HepG2 (cell line): ENCODE measurements at regions of chr7 and their contacts with region 1.

Region 1: DNA sequence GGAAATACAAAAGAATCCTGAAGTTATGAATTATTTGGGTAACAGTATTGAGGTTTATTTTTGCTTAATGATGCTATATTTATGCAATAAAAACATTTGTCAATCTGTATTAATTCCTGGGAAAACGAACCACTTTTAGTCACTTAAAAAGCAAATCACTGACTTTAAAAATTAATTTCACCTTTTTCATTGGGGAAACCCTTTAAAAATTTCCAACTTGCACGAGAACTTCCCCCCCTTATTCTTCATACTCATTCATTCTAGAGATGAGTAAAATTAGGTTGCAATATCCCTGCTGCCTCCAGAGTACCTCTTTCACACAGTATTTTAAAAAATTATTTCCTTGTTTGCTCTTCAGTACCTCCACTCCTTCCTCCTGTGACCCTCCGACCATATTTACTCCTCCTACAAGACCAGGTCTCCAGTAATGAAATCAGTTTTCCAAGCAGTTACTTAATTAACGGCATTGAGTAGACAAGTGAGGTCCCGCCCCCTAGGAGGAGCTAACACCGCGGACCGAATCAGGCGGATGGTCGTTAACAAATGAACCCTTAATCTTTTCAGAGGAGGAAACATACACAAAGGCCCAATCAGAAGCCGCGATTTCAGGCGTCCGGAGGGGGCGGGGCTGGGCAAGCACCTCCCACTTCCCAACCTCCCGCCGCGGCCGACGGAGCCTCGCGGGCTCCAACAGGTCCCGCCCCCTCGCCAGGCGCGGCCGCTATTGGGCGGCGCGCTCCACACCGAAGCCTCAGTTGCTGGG is 465 bp upstream of the TRIM24 start:
- DNase-seq: peak; percentile 96
- ATAC-seq: peak; percentile 76
- H3K4me3 ChIP-seq: peak overlapping the region; percentile 61 to 82 (median 65)
- H3K27ac ChIP-seq: peak overlapping the region; percentile 76
- H3K4me1 ChIP-seq: peaks cover 44% of the 10 kb centered on the region
- H3K27me3 ChIP-seq: peaks cover 0 to 3% of the 10 kb centered on the region in 2 experiments; a peak in 1 of 5 replicates
- CTCF ChIP-seq: no peak
- EP300 ChIP-seq: no peak; a peak in 1 of 4 replicates
- POLR2A ChIP-seq: peak in 1 of 2 experiments; percentile 47; a peak in 2 of 4 replicates
- RAD21 ChIP-seq: no peak

Region 2: GRCh38 chr7:138064856-138065357 is 394.7 kb before region 1 on chr7:
- CTCF ChIA-PET with region 1: no interaction called
- POLR2A ChIA-PET with region 1: no interaction called
- in situ Hi-C with region 1: no loop called
- intact Hi-C with region 1: loop called (anchors 1 kb)
- DNase-seq: peak; percentile 68
- ATAC-seq: peak; percentile 66
- H3K4me3 ChIP-seq: peak overlapping the region; percentile 16 to 57 (median 48)
- H3K27ac ChIP-seq: peak overlapping the region; percentile 80
- H3K4me1 ChIP-seq: peaks cover 95% of the 10 kb centered on the region
- H3K27me3 ChIP-seq: no peaks in the 10 kb centered on the region; a peak in 1 of 5 replicates
- CTCF ChIP-seq: peak; percentile 56
- EP300 ChIP-seq: peak in 1 of 2 experiments; percentile 72; a peak in 2 of 4 replicates
- POLR2A ChIP-seq: no peak
- RAD21 ChIP-seq: no peak

Region 3: GRCh38 chr7:138257459-138258196 is 202.0 kb before region 1 on chr7:
- CTCF ChIA-PET with region 1: no interaction called
- POLR2A ChIA-PET with region 1: interaction called, 5 read pairs
- in situ Hi-C with region 1: no loop called
- intact Hi-C with region 1: loop called (anchors 10 kb)
- DNase-seq: peak; percentile 99
- ATAC-seq: peak; percentile 95
- H3K4me3 ChIP-seq: no peak overlapping the region
- H3K27ac ChIP-seq: peak overlapping the region; percentile 93
- H3K4me1 ChIP-seq: peaks cover 43% of the 10 kb centered on the region
- H3K27me3 ChIP-seq: no peaks in the 10 kb centered on the region
- CTCF ChIP-seq: no peak
- EP300 ChIP-seq: peak; percentile 91 to 98
- POLR2A ChIP-seq: no peak
- RAD21 ChIP-seq: peak; percentile 83

Region 4: DNA sequence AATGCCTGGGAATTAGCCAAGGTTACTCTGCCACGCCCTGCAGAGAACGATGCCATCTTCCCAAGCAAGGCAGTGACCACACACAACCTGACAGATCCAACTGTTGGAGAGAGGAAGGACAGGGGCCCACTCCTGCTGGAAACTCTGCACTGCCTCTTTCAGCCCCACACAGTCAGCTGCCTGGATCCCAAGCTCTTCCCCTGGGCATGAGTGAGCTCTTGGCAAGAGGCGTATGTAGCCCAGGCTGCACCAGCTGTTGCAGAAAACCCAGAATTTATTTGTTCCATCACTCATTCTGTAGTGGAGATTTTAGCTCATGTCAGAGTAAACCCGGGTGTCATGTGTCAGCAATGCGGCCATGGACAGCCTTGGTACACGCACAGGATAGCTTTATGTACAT is 134.7 kb before region 1 on chr7:
- CTCF ChIA-PET with region 1: no interaction called
- POLR2A ChIA-PET with region 1: no interaction called
- in situ Hi-C with region 1: no loop called
- intact Hi-C with region 1: no loop called
- DNase-seq: no peak
- ATAC-seq: no peak
- H3K4me3 ChIP-seq: no peak overlapping the region
- H3K27ac ChIP-seq: no peak overlapping the region
- H3K4me1 ChIP-seq: peaks cover 22% of the 10 kb centered on the region
- H3K27me3 ChIP-seq: no peaks in the 10 kb centered on the region
- CTCF ChIP-seq: no peak
- EP300 ChIP-seq: no peak
- POLR2A ChIP-seq: no peak
- RAD21 ChIP-seq: no peak

Region 5: DNA sequence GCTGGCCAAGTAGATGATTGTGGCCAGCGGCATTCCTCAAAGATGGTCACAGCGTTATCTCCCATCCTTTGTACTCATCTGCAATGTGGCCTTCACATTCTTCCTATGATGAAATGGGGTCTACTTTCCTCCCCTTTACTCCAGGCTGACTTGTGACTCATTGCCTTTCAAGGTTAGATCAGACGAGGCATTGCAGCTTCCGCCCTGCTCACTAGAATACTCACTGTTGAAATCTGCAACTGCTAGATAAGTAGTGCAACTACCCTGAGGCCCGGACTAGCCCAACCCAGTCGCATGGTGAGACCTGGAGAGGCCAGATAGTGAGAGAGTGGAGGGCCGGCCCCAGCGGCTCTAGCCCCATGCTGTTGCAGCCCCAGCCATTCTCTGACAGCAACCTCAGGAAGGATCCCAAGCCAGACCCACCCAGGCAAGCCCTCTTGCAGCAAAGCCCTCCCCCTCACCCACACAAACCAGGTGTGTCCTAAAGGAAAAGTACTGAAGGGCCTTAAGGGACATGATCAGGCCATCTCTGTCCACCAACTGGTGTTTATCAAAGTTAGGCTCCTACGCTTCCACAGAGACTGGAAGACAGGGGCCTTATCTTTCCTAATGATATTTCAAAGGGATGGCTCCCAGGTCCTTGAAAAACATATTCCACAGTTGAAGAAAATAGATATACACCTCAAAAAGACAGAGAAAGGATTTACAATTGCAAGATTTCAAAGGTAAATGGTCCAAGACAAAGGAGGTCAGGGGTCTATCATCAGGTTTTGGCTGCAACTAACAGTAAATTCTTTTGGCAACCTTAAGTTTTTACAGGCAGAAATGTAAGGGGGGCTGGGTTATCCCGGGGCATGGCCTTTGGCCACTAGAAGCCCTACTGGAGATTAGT is 106.8 kb before region 1 on chr7:
- CTCF ChIA-PET with region 1: no interaction called
- POLR2A ChIA-PET with region 1: interaction called, 6 read pairs
- in situ Hi-C with region 1: no loop called
- intact Hi-C with region 1: loop called (anchors 2 kb)
- DNase-seq: peak; percentile 100
- ATAC-seq: peak; percentile 99
- H3K4me3 ChIP-seq: peak overlapping the region; percentile 43 to 52 (median 46)
- H3K27ac ChIP-seq: peak overlapping the region; percentile 99
- H3K4me1 ChIP-seq: peaks cover 29% of the 10 kb centered on the region
- H3K27me3 ChIP-seq: no peaks in the 10 kb centered on the region
- CTCF ChIP-seq: no peak; the same call in 1 of the 2 replicates
- EP300 ChIP-seq: peak; percentile 83 to 99; a peak in 3 of 4 replicates
- POLR2A ChIP-seq: peak; percentile 68 to 86
- RAD21 ChIP-seq: peak; percentile 62

Region 6: DNA sequence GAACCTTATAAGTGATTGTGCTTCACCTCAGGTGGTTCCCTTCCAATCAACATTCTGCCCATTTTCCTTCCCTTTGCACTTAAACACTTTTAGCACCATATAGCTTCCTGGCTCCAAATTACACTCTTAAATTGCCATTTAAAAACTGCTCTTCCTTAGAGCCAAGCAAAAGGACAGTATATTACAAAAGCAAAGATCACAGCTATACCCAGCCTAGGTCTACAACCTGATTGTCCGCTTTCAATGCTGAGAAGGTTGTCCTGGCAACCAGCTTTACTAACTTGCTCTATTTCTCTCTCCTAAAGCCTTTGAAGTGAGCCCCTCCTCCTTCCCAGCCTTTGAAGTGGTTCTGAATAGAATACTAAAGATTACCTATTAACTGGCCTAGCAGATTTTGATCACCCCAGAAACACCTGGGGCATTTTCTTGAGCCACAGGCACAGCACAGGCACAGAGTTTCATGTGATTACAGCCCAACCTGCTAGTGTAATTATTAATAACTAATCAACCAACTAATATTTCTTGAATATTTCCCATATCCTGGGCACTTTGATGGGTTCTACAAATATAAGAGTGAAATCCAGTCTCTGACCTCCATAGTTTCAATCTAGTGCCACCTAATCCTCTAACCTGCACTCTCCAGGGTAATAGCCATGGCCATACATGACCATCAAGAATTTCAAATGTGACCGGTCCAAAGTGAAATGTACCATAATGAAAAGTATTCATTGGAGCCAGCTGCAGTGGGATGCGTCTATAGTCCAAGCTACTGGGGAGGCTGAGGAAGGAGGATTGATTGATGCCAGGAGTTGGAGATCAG is 63.1 kb before region 1 on chr7:
- CTCF ChIA-PET with region 1: no interaction called
- POLR2A ChIA-PET with region 1: interaction called, 6 read pairs
- in situ Hi-C with region 1: loop called (anchors 5 kb)
- intact Hi-C with region 1: loop called (anchors 2 kb)
- DNase-seq: peak; percentile 100
- ATAC-seq: peak; percentile 99
- H3K4me3 ChIP-seq: peak overlapping the region in 2 of 3 experiments; percentile 4 to 38; a peak in 1 of 6 replicates
- H3K27ac ChIP-seq: peak overlapping the region; percentile 100
- H3K4me1 ChIP-seq: peaks cover 82% of the 10 kb centered on the region
- H3K27me3 ChIP-seq: no peaks in the 10 kb centered on the region
- CTCF ChIP-seq: no peak
- EP300 ChIP-seq: peak; percentile 79 to 99; a peak in 3 of 4 replicates
- POLR2A ChIP-seq: peak; percentile 34 to 39
- RAD21 ChIP-seq: peak; percentile 32; the same call in 1 of the 2 replicates

Region 7: GRCh38 chr7:138738551-138739335 is 279.1 kb after region 1 on chr7:
- CTCF ChIA-PET with region 1: no interaction called
- POLR2A ChIA-PET with region 1: no interaction called
- in situ Hi-C with region 1: no loop called
- intact Hi-C with region 1: loop called (anchors 10 kb)
- DNase-seq: peak; percentile 81
- ATAC-seq: peak; percentile 96
- H3K4me3 ChIP-seq: peak overlapping the region in 1 of 3 experiments; percentile 7; a peak in 1 of 6 replicates
- H3K27ac ChIP-seq: no peak overlapping the region
- H3K4me1 ChIP-seq: peaks cover 20% of the 10 kb centered on the region
- H3K27me3 ChIP-seq: no peaks in the 10 kb centered on the region
- CTCF ChIP-seq: peak; percentile 95
- EP300 ChIP-seq: no peak
- POLR2A ChIP-seq: no peak
- RAD21 ChIP-seq: peak; percentile 89